IMR-90 (cell line): ENCODE measurements at regions of chr3 and their contacts with region 1.

Region 1: DNA sequence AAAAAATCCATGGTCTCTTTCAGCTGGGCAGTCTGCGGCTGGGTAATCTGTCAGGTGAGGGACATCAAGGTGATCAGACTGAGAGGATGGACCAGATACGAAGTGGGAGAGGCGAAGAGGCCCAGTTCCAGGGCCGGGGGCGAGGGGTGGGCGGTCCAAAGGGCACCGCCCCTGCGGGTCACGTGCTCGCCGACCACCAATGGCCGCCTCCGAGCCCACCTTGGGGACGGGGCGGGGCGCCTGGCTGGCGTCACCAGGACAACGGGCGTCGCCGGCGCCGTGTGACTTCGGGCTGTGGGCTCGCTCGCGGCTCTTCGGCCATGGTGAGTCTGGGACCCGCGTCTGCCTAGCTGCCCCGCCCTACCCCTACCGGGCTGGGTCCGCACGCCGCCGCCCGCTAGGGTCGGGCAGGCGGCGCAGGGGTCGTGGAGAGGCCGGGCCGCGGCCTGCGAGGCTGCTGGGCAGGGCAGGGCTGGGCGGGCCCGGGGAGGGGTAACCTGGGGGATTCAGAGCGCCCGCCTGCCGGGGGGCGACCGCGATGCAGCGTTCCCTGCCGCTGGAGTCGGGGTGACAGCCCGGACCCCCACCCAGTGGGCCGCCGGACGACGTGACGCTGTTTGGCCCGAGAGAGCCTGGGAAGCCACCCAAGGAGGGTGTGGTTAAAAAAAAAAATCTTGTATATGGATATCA is at the start of gene FBXL2:
- DNase-seq: peak; percentile 49
- ATAC-seq: peak; percentile 97
- H3K4me3 ChIP-seq: peak within 1 kb of the TSS; percentile 74
- H3K27ac ChIP-seq: peak within 1 kb of the TSS; percentile 2; the same call in 1 of the 2 replicates
- H3K4me1 ChIP-seq: peaks cover 2% of the 10 kb centered on the region; the same call in 1 of the 2 replicates
- H3K27me3 ChIP-seq: no peaks in the 10 kb centered on the region
- CTCF ChIP-seq: no peak
- POLR2A ChIP-seq: no peak
- RAD21 ChIP-seq: no peak
- total RNA-seq, gene FBXL2: 15.6 and 21.0 TPM in 2 replicates

Region 2: DNA sequence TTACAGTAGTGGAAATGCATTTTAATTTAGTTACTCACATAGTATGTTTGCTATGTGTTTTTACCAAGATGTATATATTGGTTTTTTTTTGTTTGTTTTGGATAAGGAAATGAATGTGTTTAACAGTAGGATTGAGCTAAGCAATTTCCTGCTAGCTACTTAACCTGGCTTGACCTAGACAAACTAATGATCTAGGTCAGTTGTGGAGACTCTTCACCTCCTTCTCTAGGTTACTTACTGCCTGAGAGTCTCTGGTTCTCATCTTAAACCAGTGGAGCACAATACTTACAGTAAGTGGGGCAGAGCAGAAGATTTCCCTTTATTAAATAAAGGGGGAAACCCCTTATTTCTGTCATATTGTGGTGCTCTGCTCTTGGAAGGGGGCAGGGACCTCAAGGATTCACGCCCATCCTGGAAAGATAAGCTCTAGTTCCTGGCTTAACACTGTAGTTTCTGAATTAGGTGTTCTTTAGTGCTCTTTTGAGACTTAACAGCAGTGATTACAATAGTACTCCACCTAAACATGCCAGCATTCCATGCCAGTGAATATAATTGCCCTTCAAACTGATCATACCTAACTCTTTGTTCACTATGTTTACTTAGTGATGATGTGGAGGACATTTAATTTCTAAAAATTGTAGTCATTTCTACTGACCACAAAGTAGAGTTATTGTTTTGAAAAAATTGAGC is 82.9 kb after region 1 on chr3:
- CTCF ChIA-PET with region 1: no interaction called
- POLR2A ChIA-PET with region 1: no interaction called
- dilution Hi-C with region 1: no loop called
- in situ Hi-C with region 1: no loop called
- intact Hi-C with region 1: loop called (anchors 5 kb)
- DNase-seq: peak; percentile 79
- ATAC-seq: peak; percentile 55
- H3K4me3 ChIP-seq: no peak overlapping the region
- H3K27ac ChIP-seq: peak overlapping the region; percentile 3; the same call in 1 of the 2 replicates
- H3K4me1 ChIP-seq: peaks cover 8% of the 10 kb centered on the region
- H3K27me3 ChIP-seq: no peaks in the 10 kb centered on the region
- CTCF ChIP-seq: no peak
- POLR2A ChIP-seq: no peak
- RAD21 ChIP-seq: no peak